ENCODE measurements at regions of chr10 and their contacts with region 1.

Region 1: GRCh38 chr10:32346134-32346550 is 816 bp downstream of the EPC1 start:
- DNase-seq: peak; percentile 73
- H3K4me3 ChIP-seq: peak overlapping the region; percentile 94
- CTCF ChIP-seq: peak; percentile 90

Region 2: DNA sequence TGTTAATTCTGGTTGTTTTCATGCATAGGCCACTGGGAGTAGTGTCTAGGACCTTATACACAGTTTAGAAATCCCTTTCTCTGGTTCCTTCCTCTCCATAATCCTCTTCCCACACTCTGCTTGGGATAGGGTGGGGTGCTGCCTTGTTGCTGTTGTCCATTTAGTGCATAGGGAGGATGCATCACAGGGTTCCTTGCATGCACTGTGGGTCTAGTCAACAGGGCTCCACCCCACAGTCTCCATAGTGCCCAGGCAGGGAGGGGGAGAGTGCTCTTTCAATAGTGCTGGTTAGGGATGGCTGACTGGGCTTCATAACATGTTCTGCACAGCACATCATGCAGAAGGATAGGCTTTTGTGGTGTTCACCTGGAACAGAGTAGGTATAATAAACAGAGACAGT is 498.6 kb before region 1 on chr10:
- CTCF ChIA-PET with region 1: no interaction called
- POLR2A ChIA-PET with region 1: no interaction called
- DNase-seq: no peak
- H3K4me3 ChIP-seq: no peak overlapping the region
- CTCF ChIP-seq: no peak

Region 3: GRCh38 chr10:32190890-32191491 is 155.2 kb before region 1 on chr10:
- CTCF ChIA-PET with region 1: interaction called, 21 read pairs
- POLR2A ChIA-PET with region 1: no interaction called
- DNase-seq: no peak
- H3K4me3 ChIP-seq: no peak overlapping the region
- CTCF ChIP-seq: peak; percentile 45

Region 4: DNA sequence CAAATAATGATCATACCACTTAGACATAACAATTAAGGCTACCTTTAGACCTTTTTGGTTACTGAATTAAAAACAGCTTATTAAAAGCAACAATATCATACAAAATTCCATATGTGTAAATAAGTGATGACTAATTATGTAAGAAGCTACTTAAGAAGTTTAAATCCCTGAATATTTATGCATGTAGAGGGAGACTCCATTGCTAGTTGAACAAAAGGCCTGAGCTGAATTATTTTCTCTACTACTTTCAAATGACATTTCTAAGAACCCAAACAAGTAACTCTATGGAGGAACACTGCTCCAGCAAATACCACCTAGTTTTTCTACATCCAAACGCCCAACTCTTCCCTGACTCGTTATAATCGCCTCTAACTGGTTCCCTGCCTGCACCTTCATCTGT is 30.7 kb before region 1 on chr10:
- CTCF ChIA-PET with region 1: interaction called, 12 read pairs
- POLR2A ChIA-PET with region 1: no interaction called
- DNase-seq: no peak
- H3K4me3 ChIP-seq: no peak overlapping the region
- CTCF ChIP-seq: no peak

Region 5: GRCh38 chr10:32333849-32334248 is 12.3 kb before region 1 on chr10:
- CTCF ChIA-PET with region 1: interaction called, 46 read pairs
- POLR2A ChIA-PET with region 1: interaction called, 3 read pairs
- DNase-seq: no peak
- H3K4me3 ChIP-seq: no peak overlapping the region
- CTCF ChIP-seq: no peak

Region 6: GRCh38 chr10:32367793-32368453 is 21.8 kb after region 1 on chr10:
- CTCF ChIA-PET with region 1: interaction called, 37 read pairs
- POLR2A ChIA-PET with region 1: no interaction called
- DNase-seq: no peak
- H3K4me3 ChIP-seq: no peak overlapping the region
- CTCF ChIP-seq: peak; percentile 67

Region 7: DNA sequence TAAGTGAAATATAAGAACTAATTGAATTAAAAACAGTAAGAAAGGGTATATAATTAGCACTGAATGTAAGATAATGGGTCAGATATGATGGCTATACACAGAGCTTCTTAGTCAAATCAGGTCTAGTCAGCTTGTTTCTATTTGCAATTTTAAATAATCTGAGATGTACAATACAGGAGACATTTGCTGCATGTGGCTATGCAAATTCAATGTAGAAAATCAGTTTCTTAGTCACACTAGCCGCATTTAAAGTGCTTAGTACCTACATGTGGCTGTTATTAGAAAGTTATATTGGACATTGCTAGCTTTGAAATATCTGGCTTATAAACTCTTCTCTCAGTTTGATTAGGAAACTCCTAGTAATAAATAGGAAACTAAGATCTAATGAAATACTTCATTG is 125.1 kb after region 1 on chr10:
- CTCF ChIA-PET with region 1: no interaction called
- POLR2A ChIA-PET with region 1: no interaction called
- DNase-seq: no peak
- H3K4me3 ChIP-seq: no peak overlapping the region
- CTCF ChIP-seq: no peak

Region 8: GRCh38 chr10:33252324-33253203 is 906.4 kb after region 1 on chr10:
- CTCF ChIA-PET with region 1: no interaction called
- POLR2A ChIA-PET with region 1: no interaction called
- DNase-seq: peak; percentile 77
- H3K4me3 ChIP-seq: no peak overlapping the region
- CTCF ChIP-seq: no peak

Measured in AG04449 (cell line).